ENCODE measurements at regions of chr14 and their contacts with region 1.

Region 1: GRCh38 chr14:35404449-35405303 is at the start of gene NFKBIA:
- DNase-seq: peak; percentile 72 to 86
- H3K4me3 ChIP-seq: peak within 1 kb of the TSS; percentile 85
- H3K27ac ChIP-seq: peak within 1 kb of the TSS; percentile 89
- H3K4me1 ChIP-seq: peaks cover 54% of the 10 kb centered on the region
- H3K27me3 ChIP-seq: no peaks in the 10 kb centered on the region
- CTCF ChIP-seq: no peak
- total RNA-seq, gene NFKBIA: 30.2 and 34.8 TPM in 2 replicates

Region 2: DNA sequence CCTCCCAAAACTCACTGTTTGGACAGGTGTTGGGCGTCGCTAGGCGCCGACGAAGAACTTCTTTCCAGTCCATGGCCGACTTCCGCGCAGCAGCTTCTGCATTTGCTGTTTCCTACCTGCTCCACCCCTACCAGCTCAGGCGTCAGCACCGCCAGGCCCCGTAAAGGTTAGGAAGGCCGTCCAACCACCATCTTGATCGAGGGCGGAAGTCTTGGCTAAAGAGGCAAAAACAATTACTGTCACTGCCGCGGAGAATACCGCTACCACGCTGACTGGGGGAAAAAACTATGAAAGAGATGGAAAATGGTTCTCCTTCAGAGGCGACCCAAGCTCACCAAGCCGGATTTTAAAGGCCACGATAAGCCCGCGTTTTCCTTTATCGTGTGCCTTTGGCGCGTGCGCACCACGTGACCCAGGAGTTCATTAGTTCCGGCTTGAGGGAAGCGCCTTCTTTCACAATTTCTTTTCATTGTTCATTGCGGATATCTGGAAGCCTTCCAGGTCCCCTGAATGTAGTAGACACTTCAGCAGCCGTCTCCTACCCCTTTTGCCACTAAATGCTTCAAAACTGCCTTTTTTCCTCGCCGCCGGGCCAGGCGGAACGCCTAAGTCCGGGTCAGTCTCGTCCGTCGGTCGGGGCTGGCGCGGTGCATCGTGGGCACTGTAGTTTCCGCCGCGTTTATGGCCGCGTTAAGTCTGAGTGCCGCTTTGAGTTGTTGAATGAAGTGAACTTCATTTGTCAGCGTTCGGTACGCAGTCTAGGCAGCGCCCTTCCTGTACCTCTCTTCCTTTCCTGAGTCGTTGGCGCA is 282.6 kb before region 1 on chr14 and contains the starts of genes PPP2R3C and PRORP:
- CTCF ChIA-PET with region 1: no interaction called
- POLR2A ChIA-PET with region 1: no interaction called
- intact Hi-C with region 1: loop called (anchors 5 kb)
- DNase-seq: peak; percentile 84 to 87
- H3K4me3 ChIP-seq: peak within 1 kb of the TSS; percentile 65
- H3K27ac ChIP-seq: peak within 1 kb of the TSS; percentile 97
- H3K4me1 ChIP-seq: peaks cover 9% of the 10 kb centered on the region
- H3K27me3 ChIP-seq: no peaks in the 10 kb centered on the region
- CTCF ChIP-seq: no peak
- total RNA-seq, gene PPP2R3C: 13.3 and 15.4 TPM in 2 replicates
- total RNA-seq, gene PRORP: 18.2 and 24.7 TPM in 2 replicates

Region 3: DNA sequence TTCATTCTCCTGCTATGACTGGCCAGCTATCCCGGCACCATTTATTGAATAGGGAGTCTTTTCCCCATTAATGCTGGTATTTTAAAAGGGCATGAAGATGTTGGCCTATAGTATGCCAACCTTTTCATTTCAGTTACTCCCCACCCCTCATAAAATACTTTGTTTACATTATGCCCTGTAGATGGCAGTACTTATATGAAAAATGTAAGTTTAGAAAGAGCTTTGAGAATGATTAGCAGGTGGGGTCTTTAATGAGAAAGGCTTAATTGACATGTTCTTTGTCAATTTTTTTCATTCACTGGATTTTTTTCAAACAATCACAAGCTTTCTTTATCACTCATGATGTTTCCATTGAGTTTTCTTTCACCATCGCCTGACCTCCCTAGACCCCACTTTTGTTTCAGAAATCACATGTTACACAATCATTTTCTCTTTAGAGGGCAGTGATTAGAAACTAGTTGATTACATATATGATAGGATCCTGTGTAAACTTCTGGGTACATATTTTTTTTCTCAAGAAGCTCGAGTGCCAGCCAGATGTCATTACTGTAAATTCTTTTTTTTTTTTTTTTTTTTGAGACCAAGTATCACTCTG is 175.1 kb before region 1 on chr14:
- CTCF ChIA-PET with region 1: no interaction called
- POLR2A ChIA-PET with region 1: no interaction called
- intact Hi-C with region 1: loop called (anchors 1 kb)
- DNase-seq: no peak
- H3K4me3 ChIP-seq: no peak overlapping the region
- H3K27ac ChIP-seq: no peak overlapping the region
- H3K4me1 ChIP-seq: no peaks in the 10 kb centered on the region
- H3K27me3 ChIP-seq: no peaks in the 10 kb centered on the region
- CTCF ChIP-seq: peak; percentile 60

Region 4: GRCh38 chr14:35268946-35269345 is 135.7 kb before region 1 on chr14:
- CTCF ChIA-PET with region 1: no interaction called
- POLR2A ChIA-PET with region 1: no interaction called
- intact Hi-C with region 1: no loop called
- DNase-seq: no peak
- H3K4me3 ChIP-seq: no peak overlapping the region
- H3K27ac ChIP-seq: no peak overlapping the region
- H3K4me1 ChIP-seq: no peaks in the 10 kb centered on the region
- H3K27me3 ChIP-seq: no peaks in the 10 kb centered on the region
- CTCF ChIP-seq: no peak

Region 5: GRCh38 chr14:35336494-35337268 is 68.0 kb before region 1 on chr14:
- CTCF ChIA-PET with region 1: interaction called, 6 read pairs
- POLR2A ChIA-PET with region 1: interaction called, 14 read pairs
- intact Hi-C with region 1: loop called (anchors 1 kb)
- DNase-seq: peak; percentile 90 to 92
- H3K4me3 ChIP-seq: peak overlapping the region; percentile 38; the same call in 1 of the 2 replicates
- H3K27ac ChIP-seq: peak overlapping the region; percentile 92
- H3K4me1 ChIP-seq: peaks cover 79% of the 10 kb centered on the region
- H3K27me3 ChIP-seq: no peaks in the 10 kb centered on the region
- CTCF ChIP-seq: no peak

Region 6: DNA sequence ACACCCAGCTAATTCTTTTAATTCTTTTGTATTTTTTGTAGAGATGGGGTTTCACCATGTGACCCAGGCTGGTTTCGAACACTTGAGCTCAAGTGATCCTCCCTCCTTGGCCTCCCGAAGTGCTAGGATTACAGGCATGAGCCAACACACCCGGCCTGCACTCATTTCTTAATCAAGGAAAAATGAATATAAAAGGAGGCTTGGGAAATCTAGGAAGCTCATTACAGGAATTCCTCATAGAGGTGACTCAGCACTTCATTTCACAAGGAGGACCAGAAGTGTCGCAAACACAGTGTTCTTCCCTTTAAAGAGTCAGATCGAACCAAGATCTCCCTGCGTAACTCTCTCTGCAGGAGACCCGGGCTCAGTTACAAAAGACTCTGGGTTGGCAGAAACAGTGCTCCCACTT is 30.4 kb before region 1 on chr14:
- CTCF ChIA-PET with region 1: no interaction called
- POLR2A ChIA-PET with region 1: interaction called, 4 read pairs
- intact Hi-C with region 1: loop called (anchors 1 kb)
- DNase-seq: peak; percentile 49 to 92
- H3K4me3 ChIP-seq: no peak overlapping the region
- H3K27ac ChIP-seq: peak overlapping the region; percentile 72
- H3K4me1 ChIP-seq: peaks cover 21% of the 10 kb centered on the region
- H3K27me3 ChIP-seq: no peaks in the 10 kb centered on the region
- CTCF ChIP-seq: no peak

Region 7: GRCh38 chr14:36281309-36281708 is 876.6 kb after region 1 on chr14:
- CTCF ChIA-PET with region 1: no interaction called
- POLR2A ChIA-PET with region 1: no interaction called
- intact Hi-C with region 1: no loop called
- DNase-seq: no peak
- H3K4me3 ChIP-seq: no peak overlapping the region
- H3K27ac ChIP-seq: no peak overlapping the region
- H3K4me1 ChIP-seq: no peaks in the 10 kb centered on the region
- H3K27me3 ChIP-seq: no peaks in the 10 kb centered on the region
- CTCF ChIP-seq: no peak

Measured in PC-9 (cell line).